Activated CD4-positive, alpha-beta T cell treated with anti-CD3 and anti-CD28 coated beads for 36 hours (primary cell): ENCODE measurements at regions of chr11 and their contacts with region 1.

Region 1: DNA sequence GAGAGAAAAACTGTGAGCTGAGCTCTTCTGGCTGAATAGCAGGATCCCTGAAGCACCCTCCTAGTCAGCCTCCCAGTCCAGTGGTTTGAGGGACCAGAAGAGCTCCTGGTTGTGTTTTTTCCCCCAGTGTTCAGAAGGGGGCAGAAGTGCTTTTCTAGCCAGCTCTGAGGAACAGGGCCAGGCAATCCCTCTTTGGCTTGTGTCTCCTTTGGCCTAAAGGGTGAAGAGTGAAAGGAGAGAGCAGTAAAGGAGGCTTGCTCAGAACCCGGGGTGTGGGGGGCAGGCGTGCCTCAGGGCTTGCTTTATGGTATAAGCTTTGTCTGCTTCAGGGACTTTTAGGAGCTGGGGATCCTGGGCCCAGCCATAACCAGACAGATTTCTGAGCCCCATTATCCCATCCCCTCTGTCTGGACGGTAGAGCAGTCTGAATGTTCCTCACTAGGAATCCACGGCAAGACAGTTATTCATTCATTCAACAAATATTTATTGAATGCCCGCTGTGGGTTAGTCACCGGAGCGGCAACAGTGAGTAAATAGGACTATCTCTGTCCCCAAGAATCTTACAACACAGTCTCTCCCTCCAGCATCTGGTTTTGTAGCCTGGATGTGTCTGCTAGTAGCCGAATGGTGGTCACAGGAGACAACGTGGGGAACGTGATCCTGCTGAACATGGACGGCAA is 14.5 kb downstream of the ACP2 start:
- DNase-seq: peak; percentile 25
- ATAC-seq: peak; percentile 31
- H3K4me3 Mint-ChIP-seq: no peak overlapping the region
- H3K27ac Mint-ChIP-seq: peak overlapping the region; percentile 81
- H3K4me1 Mint-ChIP-seq: peaks cover 28% of the 10 kb centered on the region
- H3K27me3 Mint-ChIP-seq: no peaks in the 10 kb centered on the region

Region 2: GRCh38 chr11:47220401-47220824 is 13.7 kb before region 1 on chr11:
- CTCF ChIA-PET with region 1: interaction called, 13 read pairs
- POLR2A ChIA-PET with region 1: interaction called, 10 read pairs
- intact Hi-C with region 1: no loop called
- DNase-seq: no peak
- ATAC-seq: peak; percentile 17
- H3K4me3 Mint-ChIP-seq: no peak overlapping the region
- H3K27ac Mint-ChIP-seq: peak overlapping the region; percentile 66
- H3K4me1 Mint-ChIP-seq: peaks cover 44% of the 10 kb centered on the region
- H3K27me3 Mint-ChIP-seq: no peaks in the 10 kb centered on the region

Region 3: DNA sequence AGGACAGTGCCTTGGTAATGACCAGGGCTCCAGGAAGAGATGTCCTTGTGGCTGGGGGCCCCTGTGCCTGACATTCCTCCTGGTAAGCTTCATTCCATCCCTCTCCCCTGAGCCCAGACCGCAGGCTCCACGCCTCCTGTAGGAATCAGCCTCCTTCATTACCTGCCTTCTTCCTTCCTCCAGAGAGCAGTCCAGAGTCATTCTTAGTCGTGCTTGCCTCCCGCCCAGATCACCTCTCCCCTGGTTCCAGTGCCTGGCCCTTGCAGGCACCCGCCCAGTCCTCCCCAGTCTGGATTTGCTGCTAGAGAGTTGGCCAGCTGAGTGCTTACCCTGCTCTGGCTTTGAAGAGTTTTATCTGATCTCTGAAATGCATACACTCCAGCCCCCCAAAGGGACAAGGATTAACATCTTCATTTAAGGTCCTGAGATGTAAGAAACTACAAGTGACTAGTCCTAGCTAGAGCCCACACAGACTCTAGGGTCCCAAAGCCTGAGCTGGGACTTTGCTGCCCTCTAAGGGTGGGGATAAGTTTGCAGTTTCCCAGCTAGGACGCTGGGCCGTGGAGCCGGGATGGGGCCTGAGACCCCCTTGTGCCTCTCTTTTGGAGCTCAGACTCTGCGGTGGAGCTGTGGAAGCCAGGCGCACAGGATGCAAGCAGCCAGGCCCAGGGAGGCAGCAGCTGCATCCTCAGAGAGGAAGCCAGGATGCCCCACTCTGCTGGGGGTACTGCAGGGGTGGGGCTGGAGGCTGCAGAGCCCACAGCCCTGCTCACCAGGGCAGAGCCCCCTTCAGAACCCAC is 25.2 kb after region 1 on chr11:
- CTCF ChIA-PET with region 1: interaction called, 11 read pairs
- POLR2A ChIA-PET with region 1: no interaction called
- intact Hi-C with region 1: no loop called
- DNase-seq: peak; percentile 58
- ATAC-seq: peak; percentile 86
- H3K4me3 Mint-ChIP-seq: no peak overlapping the region
- H3K27ac Mint-ChIP-seq: no peak overlapping the region
- H3K4me1 Mint-ChIP-seq: peaks cover 3% of the 10 kb centered on the region
- H3K27me3 Mint-ChIP-seq: no peaks in the 10 kb centered on the region